GM10248 (cell line): ENCODE measurements at regions of chr5 and their contacts with region 1.

Region 1: DNA sequence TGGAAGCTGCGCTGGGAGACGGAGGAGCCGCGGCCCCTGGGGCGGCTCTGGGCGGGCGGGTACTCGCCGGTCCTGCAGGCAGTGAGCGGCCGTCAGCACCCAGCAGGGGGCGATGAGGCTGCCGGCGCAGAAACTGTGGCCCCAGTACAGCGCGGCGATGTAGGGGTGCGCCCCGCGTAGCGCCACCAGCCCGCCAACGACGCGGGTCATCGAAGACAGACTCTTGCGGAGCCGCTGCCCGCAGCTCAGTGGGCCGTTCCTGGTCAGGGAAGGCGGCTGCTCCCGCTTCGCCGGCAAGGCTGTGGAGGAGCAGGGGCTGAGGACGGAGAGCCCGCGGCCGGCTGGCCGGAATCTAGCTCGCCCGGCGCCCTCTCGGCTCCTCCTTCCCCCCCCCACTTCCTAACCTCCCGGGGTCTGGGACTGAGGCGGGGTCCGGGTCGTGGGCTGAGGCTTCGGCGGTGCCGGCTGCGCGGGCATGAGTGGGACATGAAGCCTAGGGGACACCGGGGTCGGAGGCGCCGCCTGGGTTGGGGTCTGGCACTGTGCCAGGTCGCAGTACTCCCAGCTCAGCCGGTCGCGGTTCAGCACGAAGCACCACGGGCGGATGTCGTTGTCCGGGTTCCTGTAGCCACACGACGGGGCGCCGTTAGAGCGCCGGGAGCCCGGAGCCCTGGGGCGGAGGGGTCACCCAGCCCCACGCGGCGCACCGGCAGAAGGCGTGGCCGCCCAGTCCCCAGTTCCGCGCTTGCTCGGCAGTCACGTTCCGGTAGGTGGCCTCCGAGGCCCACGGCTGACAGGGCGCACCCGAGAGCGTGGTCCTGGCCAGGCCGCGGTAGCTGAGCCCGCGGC is 3.6 kb upstream of the PFN3 start:
- DNase-seq: peak; percentile 93
- CTCF ChIP-seq: peak; percentile 92

Region 2: DNA sequence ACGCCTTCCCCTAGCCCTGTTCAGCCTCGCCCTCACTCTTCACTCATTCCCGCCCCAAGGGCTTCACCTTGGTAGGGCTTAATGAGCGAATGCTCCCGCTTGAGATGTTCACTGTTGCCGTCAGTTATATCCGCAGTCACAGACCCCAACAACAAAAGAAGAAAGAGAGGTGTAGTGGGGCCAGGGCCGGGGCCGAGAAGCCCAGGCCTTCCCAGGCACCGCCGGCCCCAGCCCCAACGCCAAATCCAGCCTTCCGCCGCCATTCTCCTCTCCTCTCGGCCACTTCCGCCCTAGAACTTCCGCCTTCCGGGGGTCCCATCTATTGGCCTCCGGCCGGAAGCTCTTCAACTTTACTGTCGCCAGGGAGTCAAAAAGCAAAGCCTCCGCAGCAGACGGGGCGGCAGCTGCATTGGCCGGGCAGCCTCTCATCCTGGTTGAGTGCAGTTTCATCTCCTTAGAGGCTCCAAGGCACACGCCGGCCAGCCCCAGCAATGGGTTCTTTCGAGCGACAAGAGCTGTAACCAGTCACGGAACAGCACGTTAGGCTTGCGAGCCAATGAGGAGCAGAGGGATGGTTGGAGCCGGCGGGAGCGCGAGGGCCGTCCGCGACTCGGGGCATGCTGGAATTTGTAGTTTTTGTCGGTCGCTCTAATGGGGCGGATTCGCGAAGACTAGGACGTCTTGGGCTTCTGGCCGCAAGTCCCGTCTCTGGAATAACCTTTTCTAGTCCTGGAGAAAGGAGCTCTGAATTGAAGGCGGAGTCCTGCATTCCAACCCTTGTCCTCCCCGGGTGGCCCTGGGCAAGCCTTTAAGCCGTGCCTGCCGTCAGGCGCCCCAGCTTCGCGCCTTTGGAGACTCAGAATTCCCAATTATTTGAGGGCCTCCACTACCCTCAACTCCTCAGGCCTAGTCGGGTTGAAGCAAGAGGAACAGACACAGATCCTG is 52.4 kb before region 1 on chr5 and contains the start of gene LMAN2:
- CTCF ChIA-PET with region 1: interaction called, 19 read pairs
- POLR2A ChIA-PET with region 1: no interaction called
- DNase-seq: peak; percentile 94
- CTCF ChIP-seq: no peak

Region 3: DNA sequence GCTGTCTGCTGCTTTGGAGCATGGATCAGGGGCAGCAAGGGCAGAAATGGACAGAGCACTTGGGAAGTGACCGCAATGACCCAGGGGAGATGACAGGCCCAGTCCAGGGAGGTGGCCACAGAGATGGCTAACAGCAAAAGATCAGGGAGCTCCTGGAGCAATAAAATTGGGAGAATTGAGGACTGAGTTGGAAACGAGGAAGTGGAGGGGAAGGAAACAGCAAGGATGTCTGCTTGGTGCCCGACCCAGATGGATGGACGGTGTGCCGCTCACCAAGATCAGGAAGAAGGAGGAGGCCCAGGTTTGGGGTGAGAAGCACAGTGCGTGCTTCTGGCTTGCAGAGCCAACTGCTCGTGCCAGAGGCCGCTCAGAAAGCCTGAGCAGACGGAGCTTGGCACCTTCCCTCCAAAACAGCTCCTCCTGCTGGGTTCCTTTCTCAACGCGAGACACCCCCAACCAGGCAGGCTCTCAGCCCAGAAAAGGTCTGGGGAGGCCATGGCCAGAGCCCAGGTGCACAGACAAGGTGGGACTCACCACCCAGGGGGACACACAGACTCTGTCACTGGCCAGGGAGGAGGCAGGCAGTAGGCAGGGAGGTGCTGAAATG is 21.5 kb before region 1 on chr5:
- CTCF ChIA-PET with region 1: interaction called, 321 read pairs
- POLR2A ChIA-PET with region 1: no interaction called
- DNase-seq: no peak
- CTCF ChIP-seq: peak; percentile 25

Region 4: GRCh38 chr5:177454397-177455035 is 50.5 kb after region 1 on chr5:
- CTCF ChIA-PET with region 1: interaction called, 549 read pairs
- POLR2A ChIA-PET with region 1: interaction called, 10 read pairs
- DNase-seq: peak; percentile 95
- CTCF ChIP-seq: peak; percentile 90

Region 5: DNA sequence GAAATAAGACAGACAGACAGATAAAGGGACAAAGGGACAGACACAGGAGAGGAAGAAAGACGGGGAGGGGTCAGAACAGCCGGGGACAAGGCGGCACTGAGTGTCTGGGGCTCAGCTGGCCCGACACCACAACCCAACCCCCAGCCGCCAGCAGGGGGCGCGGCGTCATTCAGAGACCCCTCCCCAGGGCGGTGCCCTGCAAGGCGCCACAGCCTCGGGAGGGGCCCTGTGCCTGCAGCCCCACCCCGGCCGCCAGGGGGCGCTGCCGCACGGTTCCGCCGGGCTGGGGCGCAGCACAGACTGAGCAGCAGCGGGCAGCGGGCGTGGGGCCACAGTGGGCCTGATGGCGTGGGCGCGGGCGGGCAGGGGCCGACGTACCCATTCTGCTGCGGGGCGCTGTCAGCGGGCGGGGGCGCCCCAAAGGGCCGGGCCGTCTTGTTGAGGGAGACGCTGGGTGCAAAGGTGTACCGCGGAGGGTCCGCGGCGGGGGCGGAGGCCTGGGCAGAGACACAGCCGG is 87.5 kb after region 1 on chr5:
- CTCF ChIA-PET with region 1: interaction called, 20 read pairs
- POLR2A ChIA-PET with region 1: no interaction called
- DNase-seq: peak; percentile 59
- CTCF ChIP-seq: peak; percentile 49